Posterior vena cava (tissue), 2 donors: ENCODE measurements at regions of chrX and their contacts with region 1.

Region 1: DNA sequence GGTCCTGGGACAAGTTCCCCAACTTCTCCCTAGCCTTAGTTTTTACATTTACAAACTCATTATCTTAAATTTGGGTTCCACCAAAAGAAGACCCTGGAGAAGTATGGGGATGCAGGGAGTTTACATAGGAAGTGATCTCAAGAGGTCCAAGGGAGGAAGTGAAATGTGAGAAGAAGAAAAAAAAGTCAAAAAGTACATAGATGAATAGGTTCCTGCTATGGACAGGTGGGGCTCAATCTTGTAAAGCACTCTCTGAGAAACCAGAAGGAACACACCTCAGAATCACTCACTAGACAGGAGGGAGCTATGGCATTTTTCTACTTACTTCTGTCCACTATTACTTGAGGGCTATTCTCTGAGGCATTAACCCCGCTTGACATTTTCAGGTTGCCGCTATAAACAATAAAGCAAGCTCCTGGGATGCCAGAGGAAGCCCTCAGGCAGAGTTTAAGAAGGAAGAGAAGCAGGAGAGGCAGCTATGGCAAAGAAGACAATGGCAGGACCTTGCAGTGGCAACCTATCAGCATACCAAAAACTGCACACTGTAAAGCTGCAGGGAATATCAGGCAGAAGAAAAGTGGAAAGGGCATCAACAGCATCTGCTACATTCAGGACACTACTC is 56.5 kb downstream of the ARHGAP6 start:
- DNase-seq: no peak

Region 2: GRCh38 chrX:9682456-9682855 is 1926.8 kb before region 1 on chrX:
- intact Hi-C with region 1: no loop called
- DNase-seq: peak; percentile 23

Region 3: DNA sequence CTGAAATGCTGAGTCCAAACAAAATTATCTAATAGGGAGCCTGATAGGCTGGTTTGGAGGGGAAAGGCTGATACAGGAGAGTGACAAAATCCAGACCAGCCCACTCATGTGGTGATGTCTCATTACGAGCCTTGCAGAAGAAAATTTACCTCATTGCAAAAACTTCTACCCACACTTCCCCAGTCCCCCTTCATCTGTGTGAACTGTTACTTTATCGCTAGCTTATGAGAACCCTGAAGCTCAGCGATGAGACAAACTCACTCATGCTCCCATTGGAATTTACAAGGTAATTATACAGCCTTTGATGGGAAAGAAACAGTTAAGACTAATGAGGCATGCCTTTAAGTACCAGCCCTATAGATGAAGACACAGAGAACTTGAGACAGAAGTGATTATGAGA is 19.6 kb before region 1 on chrX:
- intact Hi-C with region 1: loop called in 1 of 2 experiments (anchors 1 kb)
- DNase-seq: no peak